CD4-positive, alpha-beta T cell (primary cell): ENCODE measurements at regions of chr13 and their contacts with region 1.

Region 1: GRCh38 chr13:99656092-99656745 is 154.9 kb downstream of the TM9SF2 start:
- DNase-seq: peak; percentile 74 to 93 (median 82)
- ATAC-seq: peak; percentile 61
- H3K4me3 ChIP-seq: peak overlapping the region; percentile 37
- H3K4me3 Mint-ChIP-seq: peak overlapping the region; percentile 76
- H3K27ac ChIP-seq: peak overlapping the region; percentile 19 to 29
- H3K27ac Mint-ChIP-seq: peak overlapping the region; percentile 97
- H3K4me1 ChIP-seq: peaks cover 37% of the 10 kb centered on the region
- H3K4me1 Mint-ChIP-seq: peaks cover 48% of the 10 kb centered on the region
- H3K27me3 ChIP-seq: no peaks in the 10 kb centered on the region
- H3K27me3 Mint-ChIP-seq: no peaks in the 10 kb centered on the region
- CTCF ChIP-seq: peak; percentile 93

Region 2: DNA sequence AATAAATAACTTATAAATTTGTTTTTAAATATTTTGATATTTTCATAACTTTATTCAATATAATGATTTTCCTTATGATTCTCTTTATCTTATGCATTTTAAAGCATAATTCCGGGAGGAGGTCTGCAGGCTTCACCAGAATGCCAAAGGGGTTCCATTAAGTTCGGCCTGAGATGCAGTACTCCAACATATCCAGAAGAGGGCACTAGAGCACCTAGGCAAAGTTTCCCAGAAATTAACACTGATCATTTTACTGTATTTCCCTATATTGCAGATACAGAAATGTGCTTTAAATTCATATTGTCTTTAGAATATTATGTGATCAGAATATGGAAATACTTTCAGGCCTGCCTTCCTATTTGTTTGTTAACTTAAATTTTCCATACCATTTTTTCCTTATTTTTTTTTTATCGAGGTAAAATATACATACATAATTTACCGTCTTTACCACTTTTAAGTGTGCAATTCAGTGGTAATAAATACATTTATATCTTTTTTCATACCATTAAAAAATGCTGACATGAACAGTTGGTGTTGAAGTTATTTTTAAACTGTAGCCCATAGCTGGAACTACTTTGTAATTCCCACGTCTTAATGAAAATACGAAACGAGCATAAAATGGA is 213.8 kb before region 1 on chr13:
- CTCF ChIA-PET with region 1: no interaction called
- POLR2A ChIA-PET with region 1: interaction called, 3 read pairs
- intact Hi-C with region 1: loop called (anchors 2 to 5 kb)
- DNase-seq: peak in 10 of 14 experiments; percentile 41 to 82 (median 49)
- ATAC-seq: peak; percentile 80
- H3K4me3 ChIP-seq: no peak overlapping the region
- H3K4me3 Mint-ChIP-seq: no peak overlapping the region
- H3K27ac ChIP-seq: no peak overlapping the region
- H3K27ac Mint-ChIP-seq: no peak overlapping the region
- H3K4me1 ChIP-seq: peaks cover 2% of the 10 kb centered on the region
- H3K4me1 Mint-ChIP-seq: peaks cover 15% of the 10 kb centered on the region
- H3K27me3 ChIP-seq: no peaks in the 10 kb centered on the region
- H3K27me3 Mint-ChIP-seq: no peaks in the 10 kb centered on the region
- CTCF ChIP-seq: peak; percentile 100

Region 3: DNA sequence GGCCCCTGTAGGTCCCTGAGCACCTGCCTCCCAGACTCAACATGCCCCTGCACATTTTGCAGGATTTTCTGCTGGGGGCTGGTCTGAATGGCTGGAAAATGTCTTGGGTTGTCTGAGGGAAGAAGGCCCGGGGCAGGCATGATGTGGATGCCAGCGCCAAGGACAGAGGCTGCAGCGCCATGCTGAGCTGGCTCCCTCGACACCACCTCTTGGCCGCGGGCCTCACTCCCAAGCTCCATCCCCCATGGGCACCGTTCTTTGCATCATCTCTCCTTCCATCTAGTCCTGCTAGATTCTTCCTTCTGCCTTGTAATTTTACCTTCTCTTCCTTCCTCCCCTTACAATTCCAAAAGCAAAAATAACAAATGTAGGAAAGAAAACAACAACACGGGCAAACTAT is 244.7 kb after region 1 on chr13:
- CTCF ChIA-PET with region 1: no interaction called
- POLR2A ChIA-PET with region 1: no interaction called
- intact Hi-C with region 1: loop called in 1 of 2 experiments (anchors 5 kb)
- DNase-seq: no peak
- ATAC-seq: no peak
- H3K4me3 ChIP-seq: no peak overlapping the region
- H3K4me3 Mint-ChIP-seq: no peak overlapping the region
- H3K27ac ChIP-seq: no peak overlapping the region
- H3K27ac Mint-ChIP-seq: no peak overlapping the region
- H3K4me1 ChIP-seq: peaks cover 11% of the 10 kb centered on the region
- H3K4me1 Mint-ChIP-seq: no peaks in the 10 kb centered on the region
- H3K27me3 ChIP-seq: peaks cover 26 to 41% of the 10 kb centered on the region in 2 experiments
- H3K27me3 Mint-ChIP-seq: peaks cover 72% of the 10 kb centered on the region
- CTCF ChIP-seq: no peak

Region 4: DNA sequence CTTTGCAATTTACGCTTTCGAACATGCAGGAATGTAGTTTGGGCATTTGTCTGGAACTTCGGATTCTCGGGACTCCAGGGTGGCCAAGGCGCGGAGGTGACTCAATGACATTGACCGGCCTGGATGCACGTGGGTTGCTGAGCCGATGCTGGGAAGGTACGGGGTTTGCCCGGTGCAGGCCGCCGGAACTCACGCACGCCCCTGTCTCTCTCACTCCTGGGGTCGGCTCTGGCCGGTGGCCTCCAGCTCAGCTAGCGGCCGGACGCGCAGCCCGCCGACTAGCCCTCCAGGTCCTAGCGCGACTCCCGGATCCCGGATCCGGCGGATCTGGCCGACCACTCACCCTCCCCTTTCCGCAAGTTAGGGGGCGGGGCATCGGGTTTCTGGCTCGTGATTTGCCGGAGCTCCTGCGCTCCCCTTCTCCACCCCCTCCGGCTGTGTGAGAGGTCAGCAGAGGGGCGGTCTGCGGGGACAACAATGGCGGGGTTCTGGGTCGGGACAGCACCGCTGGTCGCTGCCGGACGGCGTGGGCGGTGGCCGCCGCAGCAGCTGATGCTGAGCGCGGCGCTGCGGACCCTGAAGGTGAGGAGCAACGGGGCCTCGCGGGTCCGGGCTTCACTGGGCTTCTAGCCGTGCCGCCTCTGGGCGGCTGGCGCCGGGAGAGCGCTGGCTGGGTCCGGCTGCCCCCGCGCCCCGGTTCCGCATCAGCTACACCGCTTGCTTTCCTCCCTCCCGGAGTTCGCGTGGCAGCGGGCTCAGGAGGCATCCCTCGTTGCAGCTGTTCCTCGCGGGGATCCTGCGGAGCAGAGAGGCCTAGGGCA is 432.6 kb after region 1 on chr13 and contains the start of gene PCCA:
- CTCF ChIA-PET with region 1: interaction called, 3 read pairs
- POLR2A ChIA-PET with region 1: no interaction called
- intact Hi-C with region 1: loop called in 1 of 2 experiments (anchors 5 kb)
- DNase-seq: peak; percentile 33 to 84 (median 66)
- ATAC-seq: peak; percentile 64
- H3K4me3 ChIP-seq: peak within 1 kb of the TSS; percentile 89
- H3K4me3 Mint-ChIP-seq: peak within 1 kb of the TSS; percentile 99
- H3K27ac ChIP-seq: no peak within 1 kb of the TSS
- H3K27ac Mint-ChIP-seq: peak within 1 kb of the TSS; percentile 73
- H3K4me1 ChIP-seq: peaks cover 16% of the 10 kb centered on the region
- H3K4me1 Mint-ChIP-seq: peaks cover 37% of the 10 kb centered on the region
- H3K27me3 ChIP-seq: no peaks in the 10 kb centered on the region
- H3K27me3 Mint-ChIP-seq: no peaks in the 10 kb centered on the region
- CTCF ChIP-seq: no peak
- total RNA-seq, gene PCCA: 4.7 to 5.2 TPM

Region 5: GRCh38 chr13:100542826-100543156 is 886.6 kb after region 1 on chr13:
- CTCF ChIA-PET with region 1: interaction called, 3 read pairs
- POLR2A ChIA-PET with region 1: interaction called, 4 read pairs
- intact Hi-C with region 1: loop called (anchors 1 to 10 kb)
- DNase-seq: peak in 3 of 14 experiments; percentile 53 to 61 (median 55)
- ATAC-seq: peak; percentile 65
- H3K4me3 ChIP-seq: no peak overlapping the region
- H3K4me3 Mint-ChIP-seq: peak overlapping the region; percentile 16
- H3K27ac ChIP-seq: no peak overlapping the region
- H3K27ac Mint-ChIP-seq: no peak overlapping the region
- H3K4me1 ChIP-seq: peaks cover 3% of the 10 kb centered on the region
- H3K4me1 Mint-ChIP-seq: peaks cover 43% of the 10 kb centered on the region
- H3K27me3 ChIP-seq: no peaks in the 10 kb centered on the region
- H3K27me3 Mint-ChIP-seq: no peaks in the 10 kb centered on the region
- CTCF ChIP-seq: peak; percentile 59

Region 6: GRCh38 chr13:101098873-101099272 is 1442.7 kb after region 1 on chr13:
- CTCF ChIA-PET with region 1: no interaction called
- POLR2A ChIA-PET with region 1: no interaction called
- intact Hi-C with region 1: loop called in 1 of 2 experiments (anchors 5 kb)
- DNase-seq: no peak
- ATAC-seq: no peak
- H3K4me3 ChIP-seq: no peak overlapping the region
- H3K4me3 Mint-ChIP-seq: no peak overlapping the region
- H3K27ac ChIP-seq: no peak overlapping the region
- H3K27ac Mint-ChIP-seq: no peak overlapping the region
- H3K4me1 ChIP-seq: no peaks in the 10 kb centered on the region
- H3K4me1 Mint-ChIP-seq: no peaks in the 10 kb centered on the region
- H3K27me3 ChIP-seq: peaks cover 0 to under 1% of the 10 kb centered on the region in 2 experiments
- H3K27me3 Mint-ChIP-seq: peaks cover 24% of the 10 kb centered on the region
- CTCF ChIP-seq: no peak